CD4-positive, alpha-beta memory T cell (primary cell): ENCODE measurements at regions of chr1 and their contacts with region 1.

Region 1: DNA sequence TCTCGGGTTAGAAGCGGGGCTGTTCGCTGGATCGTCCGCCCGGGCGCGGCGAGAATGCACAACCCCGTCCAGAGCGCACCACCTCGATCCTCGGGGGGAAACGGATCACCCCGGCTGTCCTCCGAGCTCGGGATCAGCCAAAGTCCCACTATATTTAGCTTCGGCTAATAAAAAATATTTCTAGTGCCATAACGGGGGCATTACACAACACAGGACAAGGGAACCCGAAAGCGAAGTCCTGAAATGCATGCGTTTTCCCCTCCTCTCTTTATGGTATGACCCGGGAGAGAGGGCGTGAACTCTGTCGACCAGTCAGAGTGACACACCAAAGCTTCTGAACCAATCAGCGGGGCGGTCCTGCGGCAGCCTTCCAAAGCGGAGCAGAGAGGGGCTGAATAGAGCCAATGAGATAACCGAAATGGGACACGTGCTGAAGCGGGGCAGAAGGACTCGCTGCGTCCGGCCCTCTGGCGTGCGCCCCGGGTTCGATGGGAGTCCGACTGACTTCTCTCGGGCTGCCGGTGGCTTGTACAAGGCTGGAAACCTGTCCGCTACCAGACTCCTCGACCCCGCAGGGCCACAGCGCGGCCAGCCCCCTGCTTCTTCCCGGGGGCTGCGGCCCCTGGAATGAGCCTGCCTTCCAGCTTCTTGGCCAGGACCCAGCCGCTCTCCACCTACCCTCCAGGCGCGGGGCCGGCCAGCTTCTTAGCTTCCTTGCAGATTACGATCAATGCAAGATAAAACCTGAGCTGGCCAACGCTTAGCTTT is at the start of gene ALDH4A1:
- DNase-seq: peak; percentile 93 to 97 (median 94)
- H3K4me3 ChIP-seq: peak within 1 kb of the TSS; percentile 47 to 67
- H3K4me3 Mint-ChIP-seq: peak within 1 kb of the TSS; percentile 90 to 96 (median 92)
- H3K27ac ChIP-seq: peak within 1 kb of the TSS; percentile 66
- H3K27ac Mint-ChIP-seq: peak within 1 kb of the TSS; percentile 92 to 99 (median 97)
- H3K4me1 ChIP-seq: peaks cover 23% of the 10 kb centered on the region
- H3K4me1 Mint-ChIP-seq: peaks cover 11 to 45% (median 22%) of the 10 kb centered on the region in 4 donors
- H3K27me3 ChIP-seq: no peaks in the 10 kb centered on the region
- H3K27me3 Mint-ChIP-seq: no peaks in the 10 kb centered on the region
- total RNA-seq, gene ALDH4A1: 1.4 to 1.5 TPM

Region 2: DNA sequence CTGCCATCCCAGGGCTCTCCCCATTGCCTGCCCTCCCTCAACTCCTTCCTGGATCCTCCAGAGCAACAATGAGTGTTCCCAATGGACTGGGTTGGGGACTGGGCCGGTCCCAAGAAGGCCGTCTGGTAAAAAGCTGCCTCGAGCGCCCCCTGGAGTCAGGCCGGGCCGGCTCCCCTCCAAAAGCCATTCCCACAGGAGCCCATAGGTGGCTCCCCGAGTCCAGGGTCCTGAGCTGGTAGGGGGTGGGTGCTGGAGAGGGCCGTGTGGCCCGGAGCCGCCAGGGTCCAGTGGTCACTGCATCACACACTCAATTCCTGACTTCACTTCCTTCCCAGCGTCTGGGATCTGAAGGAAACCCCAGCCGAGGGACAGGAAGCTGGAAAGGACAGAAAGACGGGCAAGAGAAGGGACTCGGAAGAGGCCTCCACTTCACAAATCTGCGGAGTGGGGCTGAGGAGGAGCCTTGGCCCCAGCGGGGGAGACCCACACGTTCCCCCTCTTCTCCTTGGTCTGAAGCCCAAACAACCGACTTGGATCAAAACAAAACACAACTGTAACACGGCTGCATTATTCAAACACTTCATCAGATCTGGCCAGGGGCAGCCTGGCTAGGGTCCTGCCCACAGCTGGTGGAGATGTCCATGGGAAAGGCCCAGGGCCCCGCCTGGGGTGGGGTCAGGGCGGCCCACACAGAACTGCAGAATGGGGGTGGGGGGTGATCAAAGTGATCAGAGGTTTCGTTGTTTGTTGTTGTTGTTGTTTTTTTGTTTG is 10.5 kb after region 1 on chr1:
- CTCF ChIA-PET with region 1: interaction called, 25 read pairs
- POLR2A ChIA-PET with region 1: interaction called, 10 read pairs
- intact Hi-C with region 1: no loop called
- DNase-seq: peak; percentile 64 to 71 (median 66)
- H3K4me3 ChIP-seq: no peak overlapping the region
- H3K4me3 Mint-ChIP-seq: peak overlapping the region in 1 of 8 donors; percentile 41
- H3K27ac ChIP-seq: peak overlapping the region; percentile 5
- H3K27ac Mint-ChIP-seq: peak overlapping the region; percentile 62 to 90 (median 82)
- H3K4me1 ChIP-seq: no peaks in the 10 kb centered on the region
- H3K4me1 Mint-ChIP-seq: peaks cover 5 to 21% (median 8%) of the 10 kb centered on the region in 4 donors
- H3K27me3 ChIP-seq: no peaks in the 10 kb centered on the region
- H3K27me3 Mint-ChIP-seq: no peaks in the 10 kb centered on the region

Region 3: DNA sequence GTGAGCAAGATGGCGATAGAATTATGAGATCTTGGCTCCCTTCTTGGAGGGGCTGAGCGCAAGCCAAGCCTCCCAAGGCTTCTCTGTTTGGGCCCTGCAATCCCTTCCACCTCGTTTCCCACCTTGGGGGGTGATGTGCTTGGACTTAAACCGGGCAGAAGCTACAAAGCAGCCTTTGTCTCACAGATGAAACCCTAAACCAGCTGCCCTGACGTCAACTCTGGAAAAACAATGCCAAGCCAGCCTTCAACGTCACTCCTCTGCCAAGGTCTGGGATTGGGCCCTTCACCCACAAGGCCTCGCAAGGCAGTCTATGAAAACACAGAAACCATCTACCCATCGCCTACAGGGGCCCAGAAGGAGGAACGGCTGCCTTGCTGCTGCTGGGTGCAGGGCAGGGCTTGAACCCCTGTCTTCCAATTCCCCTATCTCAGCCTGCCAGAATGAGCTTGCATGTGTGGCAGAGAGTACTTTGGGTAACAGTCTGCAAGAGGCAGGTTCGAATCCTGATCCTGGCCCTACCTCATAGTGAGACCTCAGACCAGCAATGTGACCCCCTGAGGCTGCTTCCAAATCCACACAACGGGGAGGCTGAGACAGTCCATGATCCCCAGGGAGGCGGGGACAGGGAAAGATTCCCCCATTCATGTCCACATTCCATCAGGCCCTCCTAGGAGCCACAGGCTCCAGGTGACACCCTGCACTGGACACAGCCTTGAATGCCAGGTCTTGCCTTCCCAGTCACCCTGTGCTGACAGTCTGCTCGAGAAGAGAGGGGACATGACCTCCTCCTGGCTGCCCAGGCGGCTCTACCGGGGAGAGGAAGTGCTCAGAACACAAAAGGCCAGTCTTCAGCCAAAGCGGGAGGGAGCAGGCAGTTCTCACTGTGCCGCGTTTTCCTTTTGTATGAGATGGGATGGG is 38.8 kb after region 1 on chr1:
- CTCF ChIA-PET with region 1: interaction called, 14 read pairs
- POLR2A ChIA-PET with region 1: no interaction called
- intact Hi-C with region 1: no loop called
- DNase-seq: no peak
- H3K4me3 ChIP-seq: no peak overlapping the region
- H3K4me3 Mint-ChIP-seq: no peak overlapping the region
- H3K27ac ChIP-seq: peak overlapping the region; percentile 0
- H3K27ac Mint-ChIP-seq: peak overlapping the region; percentile 46 to 94 (median 70)
- H3K4me1 ChIP-seq: peaks cover 96% of the 10 kb centered on the region
- H3K4me1 Mint-ChIP-seq: peaks cover 49 to 93% (median 78%) of the 10 kb centered on the region in 4 donors
- H3K27me3 ChIP-seq: no peaks in the 10 kb centered on the region
- H3K27me3 Mint-ChIP-seq: no peaks in the 10 kb centered on the region

Region 4: GRCh38 chr1:18956369-18957135 is 53.8 kb after region 1 on chr1 and contains the start of gene IFFO2:
- CTCF ChIA-PET with region 1: interaction called, 443 read pairs
- POLR2A ChIA-PET with region 1: interaction called, 55 read pairs
- intact Hi-C with region 1: loop called (anchors 1 kb)
- DNase-seq: peak; percentile 96 to 99 (median 97)
- H3K4me3 ChIP-seq: peak within 1 kb of the TSS in 1 of 2 donors; percentile 74
- H3K4me3 Mint-ChIP-seq: peak within 1 kb of the TSS; percentile 93 to 98 (median 94)
- H3K27ac ChIP-seq: peak within 1 kb of the TSS; percentile 98
- H3K27ac Mint-ChIP-seq: peak within 1 kb of the TSS; percentile 79 to 100 (median 99)
- H3K4me1 ChIP-seq: peaks cover 55% of the 10 kb centered on the region
- H3K4me1 Mint-ChIP-seq: peaks cover 31 to 66% (median 47%) of the 10 kb centered on the region in 4 donors
- H3K27me3 ChIP-seq: no peaks in the 10 kb centered on the region
- H3K27me3 Mint-ChIP-seq: no peaks in the 10 kb centered on the region
- total RNA-seq, gene IFFO2: 39.0 to 41.3 TPM

Region 5: DNA sequence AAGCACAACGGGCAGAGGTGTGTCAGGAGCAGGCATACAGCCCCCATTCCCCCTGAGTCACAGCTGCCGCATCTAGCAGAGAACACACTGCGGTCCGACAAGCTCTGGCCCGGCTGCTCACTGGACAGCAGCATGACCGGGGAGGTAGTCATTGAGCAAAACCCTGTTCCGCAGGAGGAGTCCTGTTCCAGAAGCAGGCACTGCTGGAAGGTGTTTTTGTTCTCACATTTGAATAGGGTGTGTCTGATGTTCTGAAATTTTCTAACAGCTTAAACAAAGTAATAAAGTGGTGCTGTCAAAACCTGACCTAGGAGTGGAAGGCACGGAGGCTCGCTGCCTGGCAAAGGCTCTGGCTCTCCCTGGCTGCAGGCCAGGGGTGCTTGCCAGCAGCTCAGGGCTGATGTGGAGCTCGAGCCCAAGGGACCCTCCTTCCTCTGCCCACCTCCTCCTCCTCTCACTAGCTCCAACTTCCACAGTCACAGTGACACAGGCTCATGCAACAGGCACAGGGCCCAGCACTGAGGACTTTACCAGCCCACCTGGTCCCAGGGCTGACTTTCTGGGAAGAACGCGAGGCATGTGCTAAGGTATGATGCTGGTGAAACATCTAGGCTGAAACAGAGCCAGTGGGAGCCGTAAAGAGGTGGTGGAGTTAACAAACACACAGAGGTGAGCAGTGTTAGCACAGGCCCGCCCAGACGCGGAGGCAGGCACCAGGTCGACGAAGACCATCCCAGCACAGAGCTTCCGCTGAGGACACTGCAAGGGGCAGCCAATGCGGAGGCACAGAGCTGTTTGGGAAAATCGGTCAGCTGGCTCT is 172.4 kb after region 1 on chr1:
- CTCF ChIA-PET with region 1: interaction called, 16 read pairs
- POLR2A ChIA-PET with region 1: interaction called, 12 read pairs
- intact Hi-C with region 1: loop called (anchors 1 kb)
- DNase-seq: peak in 1 of 5 donors; percentile 18
- H3K4me3 ChIP-seq: peak overlapping the region in 1 of 2 donors; percentile 3
- H3K4me3 Mint-ChIP-seq: peak overlapping the region; percentile 47 to 85 (median 74)
- H3K27ac ChIP-seq: peak overlapping the region; percentile 20
- H3K27ac Mint-ChIP-seq: peak overlapping the region; percentile 57 to 91 (median 85)
- H3K4me1 ChIP-seq: peaks cover 57% of the 10 kb centered on the region
- H3K4me1 Mint-ChIP-seq: peaks cover 37 to 66% (median 51%) of the 10 kb centered on the region in 4 donors
- H3K27me3 ChIP-seq: no peaks in the 10 kb centered on the region
- H3K27me3 Mint-ChIP-seq: no peaks in the 10 kb centered on the region

Region 6: DNA sequence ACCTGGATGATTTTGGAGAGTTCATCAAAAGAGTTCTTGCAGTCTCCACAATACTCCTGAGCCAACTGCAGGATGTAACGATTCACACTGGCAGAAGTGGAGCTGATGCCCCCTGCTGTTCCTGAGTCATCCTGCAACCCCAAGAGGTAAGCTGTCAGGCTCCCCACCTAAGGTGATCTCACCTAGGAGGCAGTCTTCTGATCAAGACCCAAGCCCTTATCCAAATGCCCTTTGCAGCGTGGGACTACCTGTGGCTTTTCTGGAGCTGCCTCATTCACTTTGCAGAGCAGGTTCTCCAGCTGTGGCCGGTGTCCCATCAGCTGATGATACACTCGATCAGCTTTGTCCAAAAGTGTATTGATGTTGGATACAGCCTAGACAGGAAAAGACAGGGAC is 211.0 kb after region 1 on chr1:
- CTCF ChIA-PET with region 1: interaction called, 19 read pairs
- POLR2A ChIA-PET with region 1: no interaction called
- intact Hi-C with region 1: no loop called
- DNase-seq: peak; percentile 19 to 52 (median 25)
- H3K4me3 ChIP-seq: no peak overlapping the region
- H3K4me3 Mint-ChIP-seq: no peak overlapping the region
- H3K27ac ChIP-seq: no peak overlapping the region
- H3K27ac Mint-ChIP-seq: peak overlapping the region in 2 of 7 donors; percentile 24 to 61
- H3K4me1 ChIP-seq: no peaks in the 10 kb centered on the region
- H3K4me1 Mint-ChIP-seq: no peaks in the 10 kb centered on the region
- H3K27me3 ChIP-seq: no peaks in the 10 kb centered on the region
- H3K27me3 Mint-ChIP-seq: no peaks in the 10 kb centered on the region